ENCODE measurements at regions of chr4 and their contacts with region 1.

Region 1: DNA sequence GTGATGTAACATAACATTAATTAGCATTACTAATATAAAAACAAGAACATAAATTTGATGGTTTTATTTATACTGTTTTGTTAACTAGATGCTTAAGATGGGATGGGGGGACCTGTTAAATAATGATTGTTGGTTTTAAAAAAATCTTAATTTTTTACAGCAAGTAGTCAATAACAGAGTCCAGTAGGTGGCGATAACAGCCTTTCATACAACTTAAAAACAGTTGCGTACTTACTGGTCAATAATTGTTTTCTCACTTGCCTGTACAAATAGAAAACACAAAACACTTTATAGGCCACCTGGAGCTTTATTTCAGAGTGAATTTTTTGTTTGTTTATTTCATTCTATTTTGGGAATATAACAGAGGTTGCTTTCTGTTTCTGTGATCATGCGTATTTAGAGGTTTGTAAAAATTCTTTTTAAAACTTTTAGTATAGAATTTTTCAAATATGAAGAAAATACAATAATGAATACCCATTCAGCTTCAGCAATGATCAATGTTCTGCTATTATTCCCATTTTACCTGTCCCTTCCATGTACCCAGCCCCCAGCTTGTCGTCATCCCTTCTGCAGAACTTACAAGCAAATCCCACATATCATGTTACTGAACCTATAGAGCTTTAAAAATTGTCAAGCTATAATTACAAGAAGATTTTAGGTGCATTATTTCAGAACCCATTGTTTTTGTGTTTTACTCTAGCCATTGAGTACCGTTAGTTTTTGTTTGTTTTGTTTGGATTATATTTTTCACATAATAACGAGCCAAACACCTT is 97.1 kb downstream of the MRPL1 start:
- DNase-seq: peak in 1 of 2 donors; percentile 21
- ATAC-seq: no peak
- H3K4me3 ChIP-seq: peak overlapping the region in 5 of 10 donors; percentile 6 to 28 (median 21)
- H3K27ac ChIP-seq: no peak overlapping the region
- H3K4me1 ChIP-seq: peaks cover 0 to 5% (median 0%) of the 10 kb centered on the region in 9 donors
- H3K27me3 ChIP-seq: no peaks in the 10 kb centered on the region
- CTCF ChIP-seq: peak; percentile 37 to 76 (median 68)

Region 2: GRCh38 chr4:78601013-78601412 is 641.3 kb after region 1 on chr4:
- intact Hi-C with region 1: loop called in 1 of 10 experiments (anchors 10 kb)
- DNase-seq: peak in 1 of 2 donors; percentile 20
- ATAC-seq: peak in 4 of 8 donors; percentile 39 to 75 (median 62)
- H3K4me3 ChIP-seq: no peak overlapping the region
- H3K27ac ChIP-seq: no peak overlapping the region
- H3K4me1 ChIP-seq: peaks cover 0 to 26% (median 18%) of the 10 kb centered on the region in 9 donors
- H3K27me3 ChIP-seq: no peaks in the 10 kb centered on the region
- CTCF ChIP-seq: no peak

Region 3: GRCh38 chr4:78612398-78613178 is 652.8 kb after region 1 on chr4:
- intact Hi-C with region 1: loop called in 2 of 10 experiments (anchors 10 kb)
- DNase-seq: peak in 1 of 2 donors; percentile 34
- ATAC-seq: peak; percentile 26 to 83 (median 68)
- H3K4me3 ChIP-seq: no peak overlapping the region
- H3K27ac ChIP-seq: no peak overlapping the region
- H3K4me1 ChIP-seq: peaks cover 0 to 37% (median 13%) of the 10 kb centered on the region in 9 donors
- H3K27me3 ChIP-seq: no peaks in the 10 kb centered on the region
- CTCF ChIP-seq: peak; percentile 32 to 78 (median 66)

Region 4: GRCh38 chr4:78864405-78865024 is 904.8 kb after region 1 on chr4:
- intact Hi-C with region 1: loop called in 7 of 10 experiments (anchors 5 to 10 kb)
- DNase-seq: peak in 1 of 2 donors; percentile 54
- ATAC-seq: peak in 6 of 8 donors; percentile 47 to 68 (median 61)
- H3K4me3 ChIP-seq: no peak overlapping the region
- H3K27ac ChIP-seq: no peak overlapping the region
- H3K4me1 ChIP-seq: peaks cover 0 to 6% (median 0%) of the 10 kb centered on the region in 9 donors
- H3K27me3 ChIP-seq: no peaks in the 10 kb centered on the region
- CTCF ChIP-seq: peak; percentile 46 to 93 (median 85)

Region 5: GRCh38 chr4:78876568-78877320 is 917.0 kb after region 1 on chr4:
- intact Hi-C with region 1: loop called in 1 of 10 experiments (anchors 10 kb)
- DNase-seq: no peak
- ATAC-seq: no peak
- H3K4me3 ChIP-seq: no peak overlapping the region
- H3K27ac ChIP-seq: no peak overlapping the region
- H3K4me1 ChIP-seq: no peaks in the 10 kb centered on the region
- H3K27me3 ChIP-seq: no peaks in the 10 kb centered on the region
- CTCF ChIP-seq: no peak